Mammary epithelial cell (primary cell): ENCODE measurements at regions of chr1 and their contacts with region 1.

Region 1: DNA sequence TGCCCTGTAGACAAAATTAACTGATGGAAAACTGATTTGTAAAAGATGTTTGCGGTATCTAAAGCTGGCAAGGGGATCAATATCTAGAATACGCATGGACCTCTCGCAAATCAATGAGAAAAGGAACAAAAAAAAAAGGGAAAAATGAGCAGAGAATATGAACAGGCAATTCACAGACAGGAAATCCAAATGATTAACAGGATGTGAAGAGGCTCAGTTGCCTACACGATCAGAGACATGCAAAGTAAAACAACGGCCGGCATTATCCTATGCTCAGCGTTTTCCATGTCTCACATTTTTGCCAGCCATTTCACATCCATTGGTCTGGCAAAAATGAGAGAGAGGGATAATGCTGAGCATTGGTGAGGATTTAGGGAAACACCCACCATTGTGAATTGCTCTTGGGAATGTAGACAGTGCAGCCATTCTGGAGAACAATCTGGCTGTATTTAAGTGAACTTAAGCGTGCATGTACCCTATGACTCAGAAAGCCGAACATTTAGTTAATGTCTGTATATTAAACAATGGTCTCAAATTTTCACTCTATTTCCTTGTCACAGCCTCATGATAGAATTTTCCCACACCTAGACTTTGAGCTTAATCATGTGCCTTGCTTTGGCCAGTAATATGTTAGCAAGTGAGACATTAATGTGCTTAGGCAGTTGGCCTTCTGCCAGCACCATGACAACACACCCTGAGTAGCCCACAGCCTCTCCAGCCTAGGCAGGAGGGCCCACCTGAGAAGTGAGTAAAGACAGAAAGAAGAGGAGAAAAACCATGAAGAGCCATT is 61.0 kb upstream of the NBPF3 start:
- DNase-seq: no peak
- H3K4me3 ChIP-seq: no peak overlapping the region
- H3K27ac ChIP-seq: no peak overlapping the region
- H3K4me1 ChIP-seq: no peaks in the 10 kb centered on the region
- H3K27me3 ChIP-seq: no peaks in the 10 kb centered on the region
- CTCF ChIP-seq: no peak

Region 2: DNA sequence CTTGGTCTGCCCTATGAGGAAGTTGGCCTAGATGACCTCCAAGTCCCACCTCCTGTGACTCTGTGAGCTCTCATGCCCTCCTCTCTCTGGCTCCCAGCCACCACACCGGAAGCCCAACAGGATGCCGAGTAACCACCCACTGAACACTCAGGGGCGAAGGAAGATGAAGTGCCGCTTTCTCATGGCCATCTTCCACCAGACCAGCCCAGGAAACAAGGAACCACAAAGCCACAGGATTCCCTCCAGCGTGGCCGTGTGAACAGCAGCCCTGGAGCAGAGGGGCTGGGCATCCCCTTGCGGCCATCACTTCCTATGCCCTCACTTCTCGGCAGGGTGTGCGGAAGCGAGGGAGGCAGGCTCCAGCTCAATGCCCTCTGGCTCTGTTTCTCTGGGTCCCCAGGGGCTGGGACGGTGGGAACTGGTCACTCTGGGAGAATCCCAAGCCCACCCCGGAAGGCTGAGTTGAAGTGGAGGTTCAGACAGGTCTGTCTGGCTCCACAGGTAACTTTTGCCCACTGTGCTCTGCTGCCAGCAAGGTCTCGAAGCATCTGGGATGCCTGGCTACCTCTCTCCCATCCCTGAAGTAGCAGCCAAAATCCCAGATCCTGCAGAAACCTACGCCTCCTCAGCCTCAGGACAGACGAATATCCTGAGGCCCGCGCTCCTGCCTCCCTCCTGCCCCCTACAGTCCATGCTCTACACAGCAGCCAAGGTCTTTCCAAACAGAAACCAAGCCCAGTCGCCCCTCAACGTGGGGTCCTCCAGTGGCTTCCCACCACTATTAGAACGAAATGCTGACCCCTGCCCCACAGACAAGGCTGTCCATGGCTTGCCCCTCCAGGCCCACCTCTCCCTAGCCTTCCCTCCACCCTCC is 44.4 kb before region 1 on chr1:
- CTCF ChIA-PET with region 1: no interaction called
- dilution Hi-C with region 1: no loop called
- in situ Hi-C with region 1: no loop called
- intact Hi-C with region 1: no loop called
- DNase-seq: peak; percentile 90
- H3K4me3 ChIP-seq: peak overlapping the region; percentile 25 to 46 (median 36)
- H3K27ac ChIP-seq: peak overlapping the region; percentile 48
- H3K4me1 ChIP-seq: peaks cover 33% of the 10 kb centered on the region
- H3K27me3 ChIP-seq: no peaks in the 10 kb centered on the region
- CTCF ChIP-seq: peak; percentile 91 to 92

Region 3: GRCh38 chr1:21344750-21345443 is 34.0 kb before region 1 on chr1:
- CTCF ChIA-PET with region 1: no interaction called
- dilution Hi-C with region 1: loop called (anchors 5 kb)
- in situ Hi-C with region 1: no loop called
- intact Hi-C with region 1: no loop called
- DNase-seq: peak; percentile 12
- H3K4me3 ChIP-seq: peak overlapping the region; percentile 68 to 89 (median 80)
- H3K27ac ChIP-seq: peak overlapping the region; percentile 20
- H3K4me1 ChIP-seq: peaks cover 22% of the 10 kb centered on the region
- H3K27me3 ChIP-seq: no peaks in the 10 kb centered on the region
- CTCF ChIP-seq: no peak

Region 4: GRCh38 chr1:21478974-21479373 is 100.1 kb after region 1 on chr1:
- CTCF ChIA-PET with region 1: no interaction called
- dilution Hi-C with region 1: loop called (anchors 5 kb)
- in situ Hi-C with region 1: no loop called
- intact Hi-C with region 1: no loop called
- DNase-seq: no peak
- H3K4me3 ChIP-seq: no peak overlapping the region
- H3K27ac ChIP-seq: no peak overlapping the region
- H3K4me1 ChIP-seq: no peaks in the 10 kb centered on the region
- H3K27me3 ChIP-seq: no peaks in the 10 kb centered on the region
- CTCF ChIP-seq: no peak

Region 5: DNA sequence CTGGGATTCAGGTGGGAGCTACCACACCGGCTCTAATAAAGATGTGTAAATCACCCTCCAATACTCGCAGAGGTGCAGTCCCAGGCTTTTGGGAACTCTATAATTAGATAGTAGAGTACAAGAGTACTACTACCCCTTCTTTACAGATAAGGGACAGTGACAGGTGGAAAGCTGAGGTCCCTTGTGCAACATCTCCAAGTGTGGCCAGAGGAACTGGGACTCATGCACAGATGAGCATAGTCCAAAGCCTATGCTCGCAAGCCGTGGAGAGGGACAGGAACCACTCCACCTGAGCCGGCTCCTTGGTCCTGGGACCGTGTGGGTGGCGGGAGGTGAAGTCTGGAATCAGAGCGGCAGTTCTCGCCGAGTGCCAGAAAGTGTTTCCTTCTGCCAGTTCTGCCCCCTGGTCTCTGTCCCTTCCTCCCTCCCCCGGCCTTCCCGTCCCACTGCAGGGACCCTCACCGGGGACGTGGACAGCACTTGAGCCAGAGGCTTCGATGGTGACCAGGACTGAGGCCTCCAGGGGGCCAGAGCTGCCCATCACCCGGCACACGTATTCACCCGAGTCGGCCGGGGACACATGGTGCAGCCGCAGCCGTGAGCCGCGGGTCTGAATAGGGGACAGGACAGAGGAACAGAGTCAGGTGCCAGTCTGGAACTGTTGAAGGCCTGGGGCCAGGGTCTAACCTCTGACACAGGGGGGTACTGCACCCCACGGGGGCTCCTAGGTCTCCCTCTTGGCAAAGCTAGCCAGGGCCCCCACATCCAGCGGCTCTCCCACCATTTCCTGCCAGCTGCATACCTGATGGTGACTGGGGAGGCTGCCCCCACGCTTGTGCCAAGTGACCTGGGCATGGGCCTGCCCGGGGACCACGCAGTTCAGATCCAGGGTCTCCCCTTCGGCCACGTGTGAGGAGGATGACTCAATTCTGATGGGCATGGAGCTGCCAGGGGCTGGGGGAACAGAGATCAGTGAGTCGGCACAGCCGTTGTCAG is 467.0 kb after region 1 on chr1:
- CTCF ChIA-PET with region 1: no interaction called
- dilution Hi-C with region 1: no loop called
- in situ Hi-C with region 1: no loop called
- intact Hi-C with region 1: no loop called
- DNase-seq: no peak
- H3K4me3 ChIP-seq: no peak overlapping the region
- H3K27ac ChIP-seq: no peak overlapping the region
- H3K4me1 ChIP-seq: peaks cover 3% of the 10 kb centered on the region
- H3K27me3 ChIP-seq: no peaks in the 10 kb centered on the region
- CTCF ChIP-seq: no peak